ENCODE measurements at regions of chr13 and their contacts with region 1.

Region 1: DNA sequence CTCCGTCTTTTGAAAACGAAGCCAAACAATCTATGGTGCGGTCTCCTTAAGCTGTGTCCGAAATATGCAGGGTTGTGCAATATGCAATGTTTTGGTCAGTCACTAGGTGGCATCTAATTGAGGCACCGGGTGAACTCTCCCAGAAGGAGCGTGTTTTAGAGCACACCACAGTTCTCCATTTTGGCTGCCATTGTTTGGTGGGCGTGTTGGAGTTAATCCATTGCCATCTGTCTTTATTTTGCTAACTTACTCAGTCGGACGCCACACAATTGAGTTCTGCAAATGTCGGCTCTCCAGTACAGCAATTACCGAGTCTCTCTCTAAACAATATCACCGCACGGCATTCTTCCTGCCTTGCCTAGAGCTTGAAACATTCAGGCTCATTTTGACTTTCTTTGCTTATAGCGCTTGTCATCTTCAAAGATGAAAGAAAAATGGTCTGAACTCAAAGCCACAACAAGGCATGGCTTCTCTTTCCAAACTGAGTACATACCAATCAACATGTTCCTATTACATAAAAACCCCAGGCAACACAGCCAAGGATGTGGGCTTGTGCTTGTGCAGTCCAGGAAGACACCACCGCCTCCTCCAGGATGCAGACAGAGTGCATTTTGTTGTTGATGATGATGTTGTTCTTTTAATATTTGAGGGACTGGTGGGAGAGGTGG is 182.0 kb upstream of the SERP2 start:
- DNase-seq: peak in 13 of 14 experiments; percentile 3 to 80 (median 23)
- ATAC-seq: peak; percentile 87
- H3K4me3 ChIP-seq: peak overlapping the region; percentile 32
- H3K4me3 Mint-ChIP-seq: peak overlapping the region; percentile 35
- H3K27ac ChIP-seq: peak overlapping the region in 1 of 2 donors; percentile 41
- H3K27ac Mint-ChIP-seq: peak overlapping the region; percentile 79
- H3K4me1 ChIP-seq: peaks cover 13% of the 10 kb centered on the region
- H3K4me1 Mint-ChIP-seq: peaks cover 31% of the 10 kb centered on the region
- H3K27me3 ChIP-seq: no peaks in the 10 kb centered on the region
- H3K27me3 Mint-ChIP-seq: no peaks in the 10 kb centered on the region
- CTCF ChIP-seq: peak; percentile 57

Region 2: DNA sequence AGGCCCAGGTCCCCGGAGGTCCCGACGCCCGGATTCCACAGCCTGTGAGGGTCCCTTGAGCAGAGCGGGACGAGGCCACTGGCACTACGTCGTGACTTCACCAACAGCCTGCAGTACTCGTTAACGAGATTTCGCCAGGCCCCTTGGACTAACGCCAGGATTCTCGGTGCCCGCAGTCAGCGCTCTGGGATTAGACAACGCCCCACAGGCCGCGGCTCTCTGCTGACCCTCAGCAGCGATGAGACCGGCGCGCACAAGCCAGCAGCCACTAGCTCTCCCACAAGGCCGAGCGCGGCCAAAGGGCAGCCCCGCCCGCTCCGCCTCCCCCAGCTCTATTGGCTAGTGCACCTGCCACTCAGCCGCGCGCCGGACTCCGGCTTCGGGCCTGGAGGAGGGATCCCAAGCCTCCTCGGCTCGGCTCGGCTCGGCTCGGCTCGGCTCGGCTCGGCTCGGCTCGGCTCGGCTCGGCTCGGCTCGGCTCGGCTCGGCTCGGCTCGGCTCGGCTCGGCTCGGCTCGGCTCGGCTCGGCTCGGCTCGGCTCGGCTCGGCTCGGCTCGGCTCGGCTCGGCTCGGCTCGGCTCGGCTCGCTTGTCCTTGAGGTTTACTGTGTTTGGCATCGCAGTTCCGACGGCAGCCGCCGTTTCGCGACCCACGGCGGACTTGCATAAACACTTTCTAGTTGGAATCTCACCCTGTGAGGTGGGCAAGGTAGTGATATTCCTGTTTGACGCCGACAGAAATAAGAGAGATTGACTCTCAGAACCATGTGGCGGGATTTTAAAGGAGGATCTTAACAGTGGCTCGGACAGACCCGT is 49.7 kb before region 1 on chr13:
- CTCF ChIA-PET with region 1: no interaction called
- POLR2A ChIA-PET with region 1: no interaction called
- intact Hi-C with region 1: loop called in 1 of 2 experiments (anchors 2 kb)
- DNase-seq: peak; percentile 76 to 95 (median 90)
- ATAC-seq: peak; percentile 96
- H3K4me3 ChIP-seq: peak overlapping the region; percentile 84
- H3K4me3 Mint-ChIP-seq: peak overlapping the region; percentile 93
- H3K27ac ChIP-seq: peak overlapping the region; percentile 48 to 76
- H3K27ac Mint-ChIP-seq: peak overlapping the region; percentile 77
- H3K4me1 ChIP-seq: peaks cover 15% of the 10 kb centered on the region
- H3K4me1 Mint-ChIP-seq: peaks cover 16% of the 10 kb centered on the region
- H3K27me3 ChIP-seq: no peaks in the 10 kb centered on the region
- H3K27me3 Mint-ChIP-seq: no peaks in the 10 kb centered on the region
- CTCF ChIP-seq: no peak

Measured in CD4-positive, alpha-beta T cell (primary cell).